Activated T-helper 2 cell treated with anti-CD3 and anti-CD28 coated beads, Interferon-gamma antibody, Interleukin-2, Interleukin-4, amounts not matched to agents 10 μg/mL and 5 μg/mL and 100 μg/mL, durations not matched to agents 14 hours and 24 hours and 36 hours (primary cell): ENCODE measurements at regions of chr17 and their contacts with region 1.

Region 1: DNA sequence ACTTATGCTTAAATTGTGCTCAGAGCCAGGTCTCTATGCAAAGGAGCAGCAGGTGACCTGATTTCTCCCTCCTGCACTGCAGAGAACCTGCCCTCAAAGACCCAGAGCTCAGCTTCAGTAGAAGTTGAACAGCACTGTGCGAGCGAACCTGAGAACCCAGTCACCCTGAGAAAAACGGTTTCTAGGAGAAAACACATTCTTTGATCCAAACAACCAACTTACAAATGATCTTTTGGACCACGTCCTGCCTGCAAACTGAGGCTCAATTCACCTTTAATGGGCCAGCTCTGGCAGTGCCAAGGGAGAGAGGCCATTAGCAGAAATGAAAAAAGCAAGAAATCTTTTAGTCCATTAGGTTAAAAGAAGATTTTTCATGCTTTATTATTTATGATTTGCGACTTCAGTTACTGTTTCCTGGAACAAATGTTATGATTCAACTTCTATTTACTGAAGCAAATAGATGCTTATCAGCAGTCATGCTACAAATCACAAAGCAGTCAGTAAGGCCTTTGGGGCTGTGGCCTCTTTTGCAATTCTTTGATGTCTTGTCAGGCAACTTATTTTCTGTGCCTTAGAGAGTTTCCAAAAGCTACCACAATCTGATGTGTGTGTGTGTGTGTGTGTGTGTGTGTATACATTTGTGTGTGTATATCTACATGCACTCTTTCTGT is 65.7 kb upstream of the LRRC37A3 start:
- DNase-seq: peak; percentile 64
- H3K4me3 Mint-ChIP-seq: peak overlapping the region; percentile 79
- H3K27ac Mint-ChIP-seq: peak overlapping the region; percentile 99
- H3K4me1 Mint-ChIP-seq: peaks cover 47% of the 10 kb centered on the region
- H3K27me3 Mint-ChIP-seq: no peaks in the 10 kb centered on the region

Region 2: DNA sequence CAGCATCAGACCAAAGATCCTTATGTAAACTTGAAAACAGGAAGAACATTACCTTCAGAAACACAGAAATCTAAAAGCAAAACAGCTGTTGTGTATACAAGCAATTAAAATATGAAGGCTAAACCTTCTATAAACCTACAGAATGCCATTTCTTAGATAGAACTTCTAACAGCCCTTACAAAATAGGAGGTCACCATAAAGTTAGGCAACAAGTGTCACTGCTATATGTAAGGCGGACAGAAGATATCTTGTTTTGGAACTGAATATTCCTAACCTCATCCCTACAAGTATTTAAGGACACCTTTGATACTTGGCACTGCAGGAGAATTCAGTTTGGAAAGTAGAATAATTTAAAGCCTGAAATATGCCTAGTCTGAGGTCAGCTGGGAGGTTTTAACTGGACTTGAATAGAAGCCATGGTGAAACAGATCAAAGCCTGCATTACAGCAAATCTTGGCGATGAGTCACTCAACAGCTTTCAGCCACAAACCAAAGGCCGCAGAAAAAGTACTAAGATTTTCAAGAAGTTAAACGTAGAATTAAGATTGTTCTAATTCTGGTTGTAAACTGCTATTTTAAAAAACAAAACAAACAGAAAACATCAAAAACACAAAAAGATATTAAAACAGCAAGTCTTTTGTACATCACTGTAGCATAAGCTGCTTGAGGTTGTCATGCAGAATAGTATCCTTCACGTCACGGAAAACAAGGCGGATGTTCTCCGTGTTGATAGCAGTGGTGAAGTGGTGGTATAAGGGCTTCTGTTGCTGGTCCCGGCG is 28.8 kb after region 1 on chr17:
- intact Hi-C with region 1: loop called (anchors 1 kb)
- DNase-seq: no peak
- H3K4me3 Mint-ChIP-seq: no peak overlapping the region
- H3K27ac Mint-ChIP-seq: no peak overlapping the region
- H3K4me1 Mint-ChIP-seq: peaks cover 58% of the 10 kb centered on the region
- H3K27me3 Mint-ChIP-seq: no peaks in the 10 kb centered on the region